ENCODE measurements at regions of chrX and their contacts with region 1.

Region 1: GRCh38 chrX:40153335-40154249 is 55.8 kb upstream of the BCOR start:
- DNase-seq: peak; percentile 85
- H3K4me3 Mint-ChIP-seq: peak overlapping the region; percentile 74
- H3K27ac Mint-ChIP-seq: peak overlapping the region; percentile 58
- H3K4me1 Mint-ChIP-seq: peaks cover 7% of the 10 kb centered on the region
- H3K27me3 Mint-ChIP-seq: no peaks in the 10 kb centered on the region

Region 2: GRCh38 chrX:40013266-40014195 is 140.1 kb before region 1 on chrX:
- CTCF ChIA-PET with region 1: no interaction called
- POLR2A ChIA-PET with region 1: no interaction called
- intact Hi-C with region 1: loop called (anchors 5 kb)
- DNase-seq: peak; percentile 53
- H3K4me3 Mint-ChIP-seq: peak overlapping the region; percentile 71
- H3K27ac Mint-ChIP-seq: peak overlapping the region; percentile 66
- H3K4me1 Mint-ChIP-seq: peaks cover 18% of the 10 kb centered on the region
- H3K27me3 Mint-ChIP-seq: peaks cover 17% of the 10 kb centered on the region

Region 3: DNA sequence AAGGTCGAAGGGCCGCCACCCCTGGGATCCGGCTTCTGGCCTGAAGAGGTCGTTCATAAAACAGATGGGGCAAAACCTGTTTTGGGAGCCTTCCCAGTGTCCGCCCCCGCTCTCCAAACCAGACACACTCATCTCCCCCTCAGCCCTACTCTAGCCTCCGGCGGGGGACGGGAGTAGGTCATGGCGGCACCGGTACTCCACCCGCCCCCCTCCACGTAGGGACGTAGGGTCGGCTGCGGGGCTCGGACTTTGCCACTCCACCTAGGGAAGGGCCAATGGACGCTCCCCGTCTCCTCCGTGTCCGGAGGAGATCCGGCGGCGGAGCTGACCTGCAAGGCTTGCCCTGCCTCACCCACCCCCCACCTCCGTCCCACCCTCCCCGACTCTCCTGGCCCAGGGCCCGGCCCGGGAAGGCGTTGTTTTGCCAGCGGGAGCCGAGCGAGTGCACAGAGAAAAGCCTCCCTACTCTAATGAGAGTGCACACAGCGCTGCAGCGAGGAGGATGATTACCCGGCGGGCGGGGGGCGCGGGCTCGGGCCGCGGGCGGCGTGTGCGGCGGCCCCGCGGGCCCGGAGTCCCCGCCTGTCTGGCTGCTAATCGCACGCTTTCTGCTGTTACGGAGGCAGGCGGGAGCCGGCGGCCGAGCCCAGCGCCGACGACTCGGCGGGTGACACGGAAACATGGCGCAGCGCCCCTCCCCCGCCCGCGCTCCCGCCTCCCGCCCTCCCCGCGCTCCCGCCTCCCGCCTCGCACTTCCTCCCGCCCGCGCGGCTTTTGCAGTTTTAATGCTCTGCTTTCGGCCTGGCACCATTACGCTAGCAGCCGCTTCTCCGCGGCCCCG is 47.5 kb before region 1 on chrX:
- CTCF ChIA-PET with region 1: no interaction called
- POLR2A ChIA-PET with region 1: interaction called, 3 read pairs
- intact Hi-C with region 1: loop called (anchors 1 kb)
- DNase-seq: peak; percentile 81
- H3K4me3 Mint-ChIP-seq: peak overlapping the region; percentile 76
- H3K27ac Mint-ChIP-seq: peak overlapping the region; percentile 70
- H3K4me1 Mint-ChIP-seq: peaks cover 11% of the 10 kb centered on the region
- H3K27me3 Mint-ChIP-seq: no peaks in the 10 kb centered on the region

Region 4: GRCh38 chrX:40266490-40267333 is 113.1 kb after region 1 on chrX:
- CTCF ChIA-PET with region 1: no interaction called
- POLR2A ChIA-PET with region 1: no interaction called
- intact Hi-C with region 1: loop called (anchors 5 kb)
- DNase-seq: peak; percentile 70
- H3K4me3 Mint-ChIP-seq: peak overlapping the region; percentile 70
- H3K27ac Mint-ChIP-seq: no peak overlapping the region
- H3K4me1 Mint-ChIP-seq: no peaks in the 10 kb centered on the region
- H3K27me3 Mint-ChIP-seq: no peaks in the 10 kb centered on the region

Measured in activated CD4-positive, alpha-beta memory T cell treated with anti-CD3 and anti-CD28 coated beads for 36 hours (primary cell).